ENCODE measurements at regions of chr15 and their contacts with region 1.

Region 1: GRCh38 chr15:65275728-65276126 is 11.0 kb downstream of the PARP16 start:
- DNase-seq: no peak

Region 2: DNA sequence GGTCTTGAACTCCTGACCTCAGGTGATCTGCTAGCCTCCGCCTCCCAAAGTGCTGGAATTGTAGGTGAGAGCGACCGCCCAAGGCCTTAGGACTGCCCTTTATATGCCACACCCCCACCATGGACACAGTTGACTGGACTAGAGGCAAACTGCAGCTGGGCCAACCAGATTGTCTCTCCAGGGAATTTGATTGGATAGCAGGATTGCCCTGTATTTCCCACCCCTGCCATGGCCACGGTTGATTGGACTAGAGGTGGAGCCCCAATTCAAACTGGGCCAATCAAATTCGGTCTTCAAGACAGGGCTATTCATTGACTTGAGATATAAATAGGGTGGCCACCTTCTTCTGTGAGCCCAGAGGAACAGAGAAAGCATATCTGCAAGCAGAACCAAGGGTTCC is 83.7 kb before region 1 on chr15:
- intact Hi-C with region 1: loop called (anchors 5 kb)
- DNase-seq: peak in 1 of 10 donors; percentile 16

Region 3: DNA sequence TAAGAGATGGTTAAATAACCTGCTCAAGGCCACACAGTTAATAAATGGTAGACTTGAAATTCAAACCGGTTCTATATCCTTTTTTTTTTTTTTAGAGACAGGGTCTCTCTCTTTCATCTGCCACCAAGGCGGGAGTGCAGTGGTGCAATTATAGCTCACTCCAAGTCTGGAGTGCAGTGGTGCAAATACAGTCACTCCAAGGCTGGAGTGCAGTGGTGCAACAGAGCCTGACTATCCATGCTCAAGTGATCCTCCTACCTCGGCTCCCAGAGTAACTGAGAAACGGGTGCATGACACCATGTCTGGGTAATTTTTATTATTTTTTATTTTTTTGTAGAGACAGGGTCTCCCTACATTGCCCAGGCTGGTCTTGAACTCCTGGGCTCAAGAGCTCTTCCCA is 218.3 kb after region 1 on chr15:
- intact Hi-C with region 1: no loop called
- DNase-seq: no peak